Endothelial cell of umbilical vein (primary cell): ENCODE measurements at regions of chr2 and their contacts with region 1.

Region 1: DNA sequence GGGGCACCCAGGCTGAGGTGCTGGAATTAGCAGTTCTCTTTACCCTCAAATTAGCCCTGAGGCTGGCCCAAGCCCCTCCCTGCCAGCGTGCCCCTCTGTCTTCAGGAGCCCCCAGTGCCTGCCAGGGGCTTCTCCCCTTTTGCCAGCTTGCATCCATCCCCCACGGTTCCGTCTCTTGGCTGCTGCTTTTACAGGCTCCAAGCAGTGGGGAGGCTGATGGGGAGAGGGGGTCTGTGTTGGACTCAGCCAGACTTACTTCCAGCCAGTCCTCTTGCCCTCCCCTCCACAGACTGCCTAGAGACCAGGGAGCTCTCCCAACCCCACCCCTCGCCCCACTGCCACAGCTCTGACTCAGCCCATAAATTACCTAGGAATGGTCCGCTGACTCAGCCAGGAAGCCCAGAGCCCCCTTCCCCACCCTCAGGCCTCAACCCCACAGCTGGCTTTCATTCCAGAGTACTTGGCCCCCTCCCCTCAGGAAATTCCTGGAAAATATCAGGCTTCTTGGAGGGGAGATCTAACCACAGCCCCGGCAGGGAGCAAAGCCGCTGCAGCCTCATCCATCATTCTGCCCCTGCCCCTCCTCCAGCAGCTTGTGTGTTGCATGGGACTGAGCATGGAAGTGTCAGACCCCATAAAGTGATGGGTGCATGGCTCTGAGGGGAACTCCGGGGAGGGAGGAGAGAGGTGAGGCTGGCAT is 184.6 kb downstream of the ZFP36L2 start:
- DNase-seq: peak; percentile 98
- H3K4me3 ChIP-seq: no peak overlapping the region
- H3K27ac ChIP-seq: peak overlapping the region; percentile 45
- H3K4me1 ChIP-seq: peaks cover 42% of the 10 kb centered on the region
- H3K27me3 ChIP-seq: no peaks in the 10 kb centered on the region
- CTCF ChIP-seq: no peak
- POLR2A ChIP-seq: no peak

Region 2: GRCh38 chr2:42954227-42954962 is 87.4 kb before region 1 on chr2:
- CTCF ChIA-PET with region 1: no interaction called
- POLR2A ChIA-PET with region 1: no interaction called
- dilution Hi-C with region 1: no loop called
- intact Hi-C with region 1: loop called (anchors 5 kb)
- DNase-seq: no peak
- H3K4me3 ChIP-seq: no peak overlapping the region
- H3K27ac ChIP-seq: peak overlapping the region; percentile 65
- H3K4me1 ChIP-seq: peaks cover 30% of the 10 kb centered on the region
- H3K27me3 ChIP-seq: no peaks in the 10 kb centered on the region
- CTCF ChIP-seq: no peak
- POLR2A ChIP-seq: no peak

Region 3: DNA sequence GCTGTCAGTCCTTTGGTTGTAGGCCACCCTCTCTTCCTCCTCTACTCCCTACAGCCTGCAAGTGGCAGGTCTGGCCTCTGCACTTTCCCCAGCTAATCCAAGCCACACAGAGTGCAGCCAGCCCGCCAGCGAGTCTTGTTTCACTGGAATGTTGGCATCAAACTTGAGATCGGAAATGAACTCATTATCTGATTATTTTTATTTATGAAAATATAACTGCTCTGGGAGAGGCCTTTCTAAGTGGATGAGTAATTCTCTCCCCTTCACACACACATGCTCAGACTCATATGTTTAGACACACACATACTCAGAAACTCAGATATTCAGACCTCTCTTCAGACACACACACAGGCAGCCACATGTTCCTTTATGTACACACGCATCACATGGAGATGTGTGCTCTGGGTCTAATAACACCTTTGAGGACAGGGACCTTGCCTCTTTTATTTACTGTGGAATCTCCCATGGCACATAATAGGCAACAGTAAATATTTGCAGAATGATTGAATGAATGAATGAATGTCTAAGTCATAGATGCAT is 33.3 kb after region 1 on chr2:
- CTCF ChIA-PET with region 1: interaction called, 3 read pairs
- POLR2A ChIA-PET with region 1: no interaction called
- dilution Hi-C with region 1: no loop called
- intact Hi-C with region 1: loop called (anchors 1 kb)
- DNase-seq: peak; percentile 97
- H3K4me3 ChIP-seq: no peak overlapping the region
- H3K27ac ChIP-seq: peak overlapping the region; percentile 95
- H3K4me1 ChIP-seq: peaks cover 27% of the 10 kb centered on the region
- H3K27me3 ChIP-seq: no peaks in the 10 kb centered on the region
- CTCF ChIP-seq: peak in 1 of 2 donors; percentile 1
- POLR2A ChIP-seq: peak; percentile 40

Region 4: DNA sequence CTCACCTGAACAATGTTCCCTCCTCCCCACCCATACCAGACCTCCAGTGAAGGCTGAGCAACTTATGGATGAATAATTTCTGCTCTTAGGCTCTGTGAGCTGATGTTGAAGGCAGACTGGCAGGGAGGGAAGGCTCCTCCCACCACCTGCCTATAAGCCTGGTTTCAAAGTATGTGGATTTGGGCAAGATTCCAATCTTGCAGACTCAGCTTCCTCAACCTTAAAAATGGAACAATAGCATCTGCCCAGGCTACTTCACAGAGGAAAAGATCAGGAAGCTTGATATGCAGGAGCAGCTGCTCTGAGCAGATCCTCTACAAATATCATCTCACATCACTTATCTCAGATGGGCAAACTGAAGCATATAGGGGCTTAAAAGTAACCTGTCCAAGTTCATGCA is 72.4 kb after region 1 on chr2:
- CTCF ChIA-PET with region 1: no interaction called
- POLR2A ChIA-PET with region 1: interaction called, 4 read pairs
- dilution Hi-C with region 1: no loop called
- intact Hi-C with region 1: loop called (anchors 2 kb)
- DNase-seq: peak; percentile 96
- H3K4me3 ChIP-seq: no peak overlapping the region
- H3K27ac ChIP-seq: peak overlapping the region; percentile 49
- H3K4me1 ChIP-seq: peaks cover 25% of the 10 kb centered on the region
- H3K27me3 ChIP-seq: no peaks in the 10 kb centered on the region
- CTCF ChIP-seq: no peak
- POLR2A ChIP-seq: peak; percentile 47

Region 5: DNA sequence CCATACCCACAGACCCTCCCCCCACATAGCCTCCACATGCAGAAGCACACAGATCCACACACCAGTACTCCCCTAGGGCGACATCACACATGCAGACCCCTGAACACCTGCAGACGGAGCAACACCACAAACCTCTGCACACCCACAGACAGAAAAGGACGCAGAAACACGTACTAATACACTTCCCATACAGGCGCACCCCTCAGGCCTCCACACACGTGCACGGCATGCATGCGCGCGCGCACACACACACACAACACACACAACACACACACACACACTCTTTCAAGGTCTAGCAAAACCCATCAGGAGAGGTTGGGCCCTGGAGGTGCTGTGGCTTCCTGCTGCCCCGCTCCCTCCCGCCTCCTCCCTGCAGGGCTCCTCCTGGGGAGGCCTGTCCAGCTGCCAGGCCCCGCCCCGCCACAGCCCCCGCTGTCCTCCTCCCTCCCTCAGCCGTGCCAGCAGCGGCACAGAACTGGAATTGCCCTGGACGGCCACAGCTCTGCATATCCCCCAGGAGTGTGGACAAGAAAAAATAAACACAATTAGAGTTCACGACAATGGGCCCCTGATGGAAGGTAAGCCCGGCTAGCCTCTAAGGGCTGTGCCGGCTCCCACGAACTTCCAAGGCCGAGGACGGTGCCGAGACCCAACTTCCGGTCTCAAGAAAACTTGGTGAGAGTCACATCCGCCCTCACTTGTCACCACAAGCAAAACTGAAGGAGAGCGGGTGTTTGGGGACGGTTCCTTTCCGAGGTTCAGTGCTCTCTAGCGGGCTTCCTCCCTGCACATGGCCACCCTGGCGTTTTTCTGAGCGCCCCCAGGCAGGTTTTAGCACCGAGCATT is 177.8 kb after region 1 on chr2:
- CTCF ChIA-PET with region 1: interaction called, 3 read pairs
- POLR2A ChIA-PET with region 1: no interaction called
- dilution Hi-C with region 1: no loop called
- intact Hi-C with region 1: loop called (anchors 5 kb)
- DNase-seq: peak; percentile 84
- H3K4me3 ChIP-seq: peak overlapping the region in 2 of 3 experiments; percentile 0 to 37
- H3K27ac ChIP-seq: peak overlapping the region; percentile 88
- H3K4me1 ChIP-seq: peaks cover 54% of the 10 kb centered on the region
- H3K27me3 ChIP-seq: no peaks in the 10 kb centered on the region
- CTCF ChIP-seq: no peak
- POLR2A ChIP-seq: peak; percentile 62